ENCODE measurements at regions of chr1 and their contacts with region 1.

Region 1: DNA sequence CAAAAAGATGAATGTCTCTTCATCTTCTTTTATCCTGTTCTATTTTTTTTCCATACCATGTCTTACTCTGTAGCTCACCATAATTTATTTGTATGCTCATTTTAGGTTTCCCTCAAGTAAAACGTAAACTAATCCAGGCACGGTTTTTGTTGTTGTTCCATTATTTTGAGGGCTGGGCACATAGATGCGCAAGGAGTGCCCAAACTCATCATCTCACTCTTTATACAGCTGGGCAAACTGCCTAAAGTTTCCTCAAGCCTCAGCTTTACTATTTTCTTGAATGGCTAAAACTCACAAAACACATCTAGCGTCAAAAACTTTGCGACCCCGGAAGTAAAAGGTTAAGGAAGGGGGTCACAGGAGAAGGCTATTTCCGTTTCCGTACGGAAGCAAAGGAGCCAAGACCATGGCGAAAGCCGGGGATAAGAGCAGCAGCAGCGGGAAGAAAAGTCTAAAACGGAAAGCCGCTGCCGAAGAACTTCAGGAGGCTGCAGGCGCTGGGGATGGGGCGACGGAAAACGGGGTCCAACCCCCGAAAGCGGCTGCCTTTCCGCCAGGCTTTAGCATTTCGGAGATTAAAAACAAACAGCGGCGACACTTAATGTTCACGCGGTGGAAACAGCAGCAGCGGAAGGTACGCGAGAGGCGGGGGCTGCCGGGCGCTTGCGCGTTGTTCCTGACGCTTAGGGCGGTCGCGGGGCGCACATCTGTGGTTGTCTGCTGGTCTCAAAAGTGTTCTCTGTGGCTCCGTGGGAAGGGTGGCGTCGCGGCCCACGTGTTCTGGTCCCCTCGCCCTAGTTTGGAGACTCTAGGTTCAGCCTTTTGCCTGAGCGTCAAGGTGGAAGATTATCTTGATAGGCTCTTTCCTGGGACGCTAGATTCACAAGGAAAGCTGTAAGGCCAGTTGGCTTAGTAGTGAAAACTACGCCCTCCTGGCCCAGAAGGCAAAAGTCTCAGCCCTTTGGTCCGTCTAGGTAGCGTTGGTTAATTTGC is at the start of gene RPF1:
- DNase-seq: peak; percentile 74
- H3K4me3 Mint-ChIP-seq: peak within 1 kb of the TSS; percentile 99
- H3K27ac Mint-ChIP-seq: peak within 1 kb of the TSS; percentile 95
- H3K4me1 Mint-ChIP-seq: peaks cover 34% of the 10 kb centered on the region
- H3K27me3 Mint-ChIP-seq: peaks cover 18% of the 10 kb centered on the region
- total RNA-seq, gene RPF1: 57.2 to 57.6 TPM

Region 2: DNA sequence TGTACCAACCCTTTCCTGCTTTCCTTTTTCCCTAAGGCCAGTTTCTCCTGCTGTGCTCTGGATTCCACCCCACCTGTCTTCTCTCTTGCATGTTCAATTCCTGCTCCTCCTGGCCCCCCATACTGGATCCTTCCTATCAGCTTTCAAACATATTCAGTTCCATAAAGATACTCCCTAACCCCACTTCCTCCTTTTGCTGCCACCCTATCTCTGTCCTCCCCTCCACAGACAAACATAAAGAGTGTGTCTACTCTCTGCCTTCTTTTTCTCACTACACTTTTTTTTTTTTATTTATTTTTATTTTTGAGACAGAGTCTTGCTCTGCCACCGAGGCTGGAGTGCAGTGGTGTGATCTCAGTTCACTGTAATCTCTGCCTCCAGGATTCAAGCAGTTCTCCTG is 17.1 kb before region 1 on chr1:
- CTCF ChIA-PET with region 1: no interaction called
- intact Hi-C with region 1: no loop called
- DNase-seq: no peak
- H3K4me3 Mint-ChIP-seq: no peak overlapping the region
- H3K27ac Mint-ChIP-seq: no peak overlapping the region
- H3K4me1 Mint-ChIP-seq: no peaks in the 10 kb centered on the region
- H3K27me3 Mint-ChIP-seq: peaks cover 14% of the 10 kb centered on the region

Region 3: GRCh38 chr1:84492726-84493125 is 13.6 kb after region 1 on chr1:
- CTCF ChIA-PET with region 1: interaction called, 4 read pairs
- intact Hi-C with region 1: loop called (anchors 1 kb)
- DNase-seq: no peak
- H3K4me3 Mint-ChIP-seq: no peak overlapping the region
- H3K27ac Mint-ChIP-seq: no peak overlapping the region
- H3K4me1 Mint-ChIP-seq: peaks cover 10% of the 10 kb centered on the region
- H3K27me3 Mint-ChIP-seq: no peaks in the 10 kb centered on the region

Region 4: GRCh38 chr1:84573967-84574842 is 95.0 kb after region 1 on chr1 and contains the start of gene CTBS:
- CTCF ChIA-PET with region 1: interaction called, 3 read pairs
- intact Hi-C with region 1: loop called (anchors 1 kb)
- DNase-seq: peak; percentile 86
- H3K4me3 Mint-ChIP-seq: peak within 1 kb of the TSS; percentile 95
- H3K27ac Mint-ChIP-seq: peak within 1 kb of the TSS; percentile 98
- H3K4me1 Mint-ChIP-seq: peaks cover 28% of the 10 kb centered on the region
- H3K27me3 Mint-ChIP-seq: no peaks in the 10 kb centered on the region
- total RNA-seq, gene CTBS: 21.1 to 21.2 TPM

Region 5: DNA sequence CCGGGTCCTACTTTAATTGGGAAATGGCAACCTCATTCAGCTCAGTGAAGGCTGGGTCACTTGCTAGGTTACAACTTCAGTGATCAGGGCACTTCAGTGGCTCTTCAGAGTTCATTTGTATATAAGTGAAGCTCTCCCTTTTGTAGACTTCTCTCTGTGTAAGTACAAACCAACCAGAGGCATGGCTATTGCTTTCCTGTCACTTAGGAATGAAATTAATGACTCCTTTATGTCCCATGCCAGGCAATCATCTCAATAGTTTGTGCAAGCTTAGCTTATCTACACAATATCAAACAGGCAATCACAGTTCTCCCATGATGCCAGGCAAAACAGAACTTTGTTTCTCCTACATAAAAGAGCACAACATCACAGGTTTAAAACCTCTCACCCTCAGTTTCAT is 117.8 kb after region 1 on chr1:
- CTCF ChIA-PET with region 1: no interaction called
- intact Hi-C with region 1: no loop called
- DNase-seq: no peak
- H3K4me3 Mint-ChIP-seq: no peak overlapping the region
- H3K27ac Mint-ChIP-seq: no peak overlapping the region
- H3K4me1 Mint-ChIP-seq: peaks cover 31% of the 10 kb centered on the region
- H3K27me3 Mint-ChIP-seq: no peaks in the 10 kb centered on the region

Measured in activated naive CD4-positive, alpha-beta T cell treated with anti-CD3 and anti-CD28 coated beads for 36 hours (primary cell).